ENCODE measurements at regions of chr1 and their contacts with region 1.

Region 1: GRCh38 chr1:223031733-223032601 is 111.1 kb downstream of the TLR5 start:
- DNase-seq: no peak
- H3K4me3 ChIP-seq: peak overlapping the region in 1 of 4 experiments; percentile 59; a peak in 1 of 8 replicates
- H3K27ac ChIP-seq: peak overlapping the region; percentile 76
- H3K4me1 ChIP-seq: peaks cover 13 to 22% (median 21%) of the 10 kb centered on the region in 4 experiments
- H3K27me3 ChIP-seq: peaks cover 0 to 2% (median 0%) of the 10 kb centered on the region in 4 experiments; a peak in 1 of 7 replicates
- CTCF ChIP-seq: no peak
- EP300 ChIP-seq: no peak
- POLR2A ChIP-seq: no peak; a peak in 1 of 3 replicates
- RAD21 ChIP-seq: no peak

Region 2: GRCh38 chr1:223010582-223011504 is 21.1 kb before region 1 on chr1:
- CTCF ChIA-PET with region 1: interaction called, 4 read pairs
- POLR2A ChIA-PET with region 1: interaction called, 41 read pairs
- DNase-seq: no peak
- H3K4me3 ChIP-seq: peak overlapping the region in 2 of 4 experiments; percentile 9 to 22; a peak in 2 of 8 replicates
- H3K27ac ChIP-seq: no peak overlapping the region; the same call in 1 of the 2 replicates
- H3K4me1 ChIP-seq: peaks cover 0 to 5% (median 2%) of the 10 kb centered on the region in 4 experiments; a peak in 4 of 7 replicates
- H3K27me3 ChIP-seq: no peaks in the 10 kb centered on the region
- CTCF ChIP-seq: no peak
- EP300 ChIP-seq: no peak
- POLR2A ChIP-seq: peak in 1 of 2 experiments; percentile 71; a peak in 2 of 3 replicates
- RAD21 ChIP-seq: no peak

Region 3: DNA sequence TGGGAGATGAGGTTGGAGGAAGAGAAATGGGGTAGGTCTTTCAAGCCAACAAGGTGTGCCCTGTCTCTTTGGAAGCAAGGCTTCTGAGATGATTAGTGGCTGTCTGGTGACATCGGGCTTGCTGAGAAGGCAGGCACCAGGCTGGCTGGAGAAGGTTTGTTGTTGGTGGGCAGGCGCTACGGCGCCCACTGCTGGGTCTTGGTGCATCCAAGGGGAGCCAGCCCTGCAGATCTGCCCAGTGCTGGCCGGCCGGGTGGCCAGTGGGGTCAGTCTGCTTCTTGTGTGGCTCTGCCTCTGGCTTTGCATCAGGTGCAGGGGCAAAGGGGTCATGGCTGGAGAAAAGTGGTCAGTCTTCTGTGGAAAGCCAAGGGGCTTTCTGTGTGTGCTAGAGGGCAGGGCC is 15.1 kb before region 1 on chr1:
- CTCF ChIA-PET with region 1: interaction called, 4 read pairs
- POLR2A ChIA-PET with region 1: interaction called, 65 read pairs
- DNase-seq: no peak
- H3K4me3 ChIP-seq: no peak overlapping the region
- H3K27ac ChIP-seq: no peak overlapping the region
- H3K4me1 ChIP-seq: peaks cover 3 to 18% (median 7%) of the 10 kb centered on the region in 4 experiments
- H3K27me3 ChIP-seq: no peaks in the 10 kb centered on the region
- CTCF ChIP-seq: peak; percentile 16 to 38 (median 31); a peak in 3 of 4 replicates
- EP300 ChIP-seq: no peak
- POLR2A ChIP-seq: no peak
- RAD21 ChIP-seq: peak; percentile 25 to 34

Region 4: GRCh38 chr1:223062177-223062576 is 30.2 kb after region 1 on chr1:
- CTCF ChIA-PET with region 1: interaction called, 5 read pairs
- POLR2A ChIA-PET with region 1: interaction called, 10 read pairs
- DNase-seq: no peak
- H3K4me3 ChIP-seq: no peak overlapping the region
- H3K27ac ChIP-seq: no peak overlapping the region
- H3K4me1 ChIP-seq: no peaks in the 10 kb centered on the region
- H3K27me3 ChIP-seq: no peaks in the 10 kb centered on the region
- CTCF ChIP-seq: no peak
- EP300 ChIP-seq: no peak
- POLR2A ChIP-seq: no peak
- RAD21 ChIP-seq: no peak

Region 5: DNA sequence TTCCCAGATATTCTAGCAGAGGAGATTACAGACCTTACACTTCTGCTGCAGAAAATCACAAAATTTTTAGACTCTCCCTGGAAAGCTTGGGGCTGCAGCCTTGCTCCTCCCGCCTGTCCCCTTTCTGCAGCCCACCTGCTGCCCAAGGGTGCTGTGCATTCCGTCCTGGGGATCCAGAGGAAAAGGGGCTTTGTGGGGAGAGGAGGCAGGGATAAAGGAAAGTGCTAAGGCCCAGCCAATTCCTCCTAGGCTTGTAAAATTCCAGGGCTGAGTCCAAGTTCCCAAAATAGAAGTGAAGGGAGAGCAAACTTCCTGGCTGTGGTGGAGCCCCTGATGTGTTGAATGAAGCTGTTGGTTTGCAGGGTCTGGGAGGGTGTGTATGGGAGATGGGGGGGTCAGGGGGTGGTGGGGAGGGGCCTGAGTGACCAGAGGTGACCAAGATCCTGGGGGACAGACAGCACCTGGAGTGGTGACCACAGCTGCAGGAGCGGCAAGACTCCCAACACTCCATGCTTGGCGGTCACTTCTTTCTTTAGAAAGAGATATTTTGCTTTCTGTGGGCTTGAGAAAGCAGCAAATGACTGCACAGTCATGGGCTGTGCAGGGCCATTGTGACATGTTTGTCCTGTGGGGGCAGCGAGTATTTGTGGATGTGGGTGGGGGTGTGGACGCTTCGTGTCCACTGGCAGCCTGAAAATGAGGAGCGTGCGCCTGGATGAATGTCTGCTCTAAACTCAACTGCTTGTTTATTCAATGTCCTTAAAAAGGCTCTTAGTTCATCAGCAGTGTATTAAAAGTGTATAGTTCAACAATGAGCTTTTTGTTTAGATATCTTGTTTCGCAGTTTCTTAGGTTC is 42.7 kb after region 1 on chr1:
- CTCF ChIA-PET with region 1: interaction called, 3 read pairs
- POLR2A ChIA-PET with region 1: interaction called, 30 read pairs
- DNase-seq: no peak
- H3K4me3 ChIP-seq: no peak overlapping the region
- H3K27ac ChIP-seq: no peak overlapping the region
- H3K4me1 ChIP-seq: peaks cover 4 to 11% (median 7%) of the 10 kb centered on the region in 4 experiments
- H3K27me3 ChIP-seq: no peaks in the 10 kb centered on the region
- CTCF ChIP-seq: no peak
- EP300 ChIP-seq: no peak
- POLR2A ChIP-seq: no peak
- RAD21 ChIP-seq: no peak

Region 6: GRCh38 chr1:223081181-223081994 is 49.4 kb after region 1 on chr1:
- CTCF ChIA-PET with region 1: interaction called, 3 read pairs
- POLR2A ChIA-PET with region 1: interaction called, 30 read pairs
- DNase-seq: peak; percentile 89 to 90
- H3K4me3 ChIP-seq: no peak overlapping the region
- H3K27ac ChIP-seq: no peak overlapping the region
- H3K4me1 ChIP-seq: peaks cover 0 to 2% (median under 1%) of the 10 kb centered on the region in 4 experiments; a peak in 1 of 7 replicates
- H3K27me3 ChIP-seq: peaks cover 0 to 5% (median 0%) of the 10 kb centered on the region in 4 experiments; a peak in 1 of 7 replicates
- CTCF ChIP-seq: peak; percentile 88 to 97 (median 89)
- EP300 ChIP-seq: no peak
- POLR2A ChIP-seq: no peak
- RAD21 ChIP-seq: peak; percentile 99

Region 7: DNA sequence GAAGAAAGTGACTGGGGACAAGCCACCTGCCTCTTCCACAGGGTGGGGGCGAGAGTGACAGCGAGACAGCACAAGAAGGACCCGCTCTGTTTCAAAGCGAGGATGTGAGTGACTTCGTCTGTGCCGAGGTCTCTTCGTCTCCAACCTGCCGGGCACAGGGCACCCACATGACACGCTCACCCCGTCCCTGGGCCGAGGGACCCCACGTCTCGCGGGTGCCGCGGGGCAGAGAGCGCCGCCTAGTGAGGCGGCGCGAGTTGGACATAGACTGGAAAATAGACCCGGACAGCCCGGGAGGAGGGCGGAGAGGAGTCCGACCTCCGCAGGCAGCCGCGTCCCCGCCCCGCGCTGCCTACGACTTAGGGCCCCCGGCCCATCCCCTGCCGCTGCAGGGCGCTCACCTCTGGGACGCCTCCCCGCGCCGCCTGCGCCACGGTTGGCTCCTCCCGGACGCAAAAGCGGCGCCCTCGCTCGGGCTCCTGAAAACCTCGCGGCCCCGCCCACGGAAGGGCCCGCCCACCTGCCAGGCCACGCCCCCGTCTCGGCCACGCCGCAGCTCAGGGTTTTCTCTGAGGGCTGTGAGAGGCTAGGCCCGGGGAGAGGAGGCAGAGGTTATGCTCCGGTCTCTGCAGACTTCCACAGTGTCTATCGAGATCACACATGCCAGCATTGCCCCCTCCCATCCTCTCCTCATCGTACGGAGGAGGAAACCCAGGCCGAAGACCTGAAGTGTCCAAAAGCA is 111.0 kb after region 1 on chr1 and contains the start of gene TLR5:
- CTCF ChIA-PET with region 1: no interaction called
- POLR2A ChIA-PET with region 1: no interaction called
- DNase-seq: peak; percentile 67 to 93
- H3K4me3 ChIP-seq: peak within 1 kb of the TSS; percentile 25 to 60 (median 42)
- H3K27ac ChIP-seq: no peak within 1 kb of the TSS
- H3K4me1 ChIP-seq: peaks cover 0 to 12% (median 5%) of the 10 kb centered on the region in 4 experiments; a peak in 5 of 7 replicates
- H3K27me3 ChIP-seq: peaks cover 0 to 6% (median 4%) of the 10 kb centered on the region in 4 experiments; a peak in 4 of 7 replicates
- CTCF ChIP-seq: peak; percentile 52 to 61 (median 61)
- EP300 ChIP-seq: no peak
- POLR2A ChIP-seq: 0 out of 3 replicates have a peak, but pooled peaks of 1 of the 2 experiments have one; percentile 27
- RAD21 ChIP-seq: peak; percentile 25 to 44; a peak in 2 of 4 replicates
- total RNA-seq, gene TLR5: 0.35 and 0.94 TPM in 2 replicates

Region 8: GRCh38 chr1:223180731-223181321 is 148.9 kb after region 1 on chr1:
- CTCF ChIA-PET with region 1: no interaction called
- POLR2A ChIA-PET with region 1: no interaction called
- DNase-seq: no peak
- H3K4me3 ChIP-seq: no peak overlapping the region
- H3K27ac ChIP-seq: no peak overlapping the region
- H3K4me1 ChIP-seq: peaks cover 0 to 3% (median under 1%) of the 10 kb centered on the region in 4 experiments; a peak in 2 of 7 replicates
- H3K27me3 ChIP-seq: no peaks in the 10 kb centered on the region; a peak in 1 of 7 replicates
- CTCF ChIP-seq: no peak
- EP300 ChIP-seq: no peak
- POLR2A ChIP-seq: no peak
- RAD21 ChIP-seq: no peak

Measured in H1 (cell line).